Dendritic cell treated with granulocyte-macrophage colony-stimulating factor and Interleukin-4, amounts not matched to agents 40 ng/mL and 50 ng/mL, for 4 days (primary cell): ENCODE measurements at regions of chr12 and their contacts with region 1.

Region 1: GRCh38 chr12:110449799-110450497 is at the start of gene ARPC3:
- H3K4me3 Mint-ChIP-seq: peak within 1 kb of the TSS; percentile 100
- H3K27ac Mint-ChIP-seq: peak within 1 kb of the TSS; percentile 100
- H3K4me1 Mint-ChIP-seq: peaks cover 57% of the 10 kb centered on the region
- H3K27me3 Mint-ChIP-seq: no peaks in the 10 kb centered on the region

Region 2: DNA sequence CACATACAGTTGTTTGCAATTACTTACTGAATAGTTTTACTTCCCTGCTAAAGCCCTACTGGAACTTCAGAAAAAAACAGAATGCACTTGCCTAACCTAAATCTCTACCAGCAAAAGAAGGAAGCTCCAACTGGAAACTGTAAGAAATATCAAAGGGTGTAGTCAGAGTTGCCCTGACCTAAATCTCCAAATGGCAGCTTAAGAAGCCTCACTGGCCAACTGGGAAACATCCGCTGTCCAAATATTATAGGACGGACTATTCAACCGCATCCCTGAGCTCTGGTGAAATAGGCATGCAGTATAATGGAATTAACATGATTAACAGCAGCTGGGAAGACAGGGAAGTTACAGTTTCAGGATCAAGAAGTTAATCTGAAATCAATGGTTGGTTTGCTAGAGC is 70.8 kb before region 1 on chr12:
- intact Hi-C with region 1: no loop called
- H3K4me3 Mint-ChIP-seq: no peak overlapping the region
- H3K27ac Mint-ChIP-seq: peak overlapping the region; percentile 71
- H3K4me1 Mint-ChIP-seq: peaks cover 12% of the 10 kb centered on the region
- H3K27me3 Mint-ChIP-seq: no peaks in the 10 kb centered on the region

Region 3: GRCh38 chr12:110468212-110469048 is 18.5 kb after region 1 on chr12 and contains the starts of genes FAM216A and GPN3:
- intact Hi-C with region 1: loop called (anchors 2 kb)
- H3K4me3 Mint-ChIP-seq: peak within 1 kb of the TSS; percentile 96
- H3K27ac Mint-ChIP-seq: peak within 1 kb of the TSS; percentile 84
- H3K4me1 Mint-ChIP-seq: peaks cover 33% of the 10 kb centered on the region
- H3K27me3 Mint-ChIP-seq: no peaks in the 10 kb centered on the region

Region 4: GRCh38 chr12:110501752-110502738 is 52.1 kb after region 1 on chr12 and contains the starts of genes RAD9B and VPS29:
- intact Hi-C with region 1: loop called (anchors 2 kb)
- H3K4me3 Mint-ChIP-seq: peak within 1 kb of the TSS; percentile 89
- H3K27ac Mint-ChIP-seq: peak within 1 kb of the TSS; percentile 92
- H3K4me1 Mint-ChIP-seq: peaks cover 28% of the 10 kb centered on the region
- H3K27me3 Mint-ChIP-seq: no peaks in the 10 kb centered on the region

Region 5: GRCh38 chr12:110549716-110550115 is 99.8 kb after region 1 on chr12:
- intact Hi-C with region 1: loop called (anchors 5 kb)
- H3K4me3 Mint-ChIP-seq: no peak overlapping the region
- H3K27ac Mint-ChIP-seq: no peak overlapping the region
- H3K4me1 Mint-ChIP-seq: peaks cover 33% of the 10 kb centered on the region
- H3K27me3 Mint-ChIP-seq: no peaks in the 10 kb centered on the region